Activated CD8-positive, alpha-beta T cell treated with anti-CD3 and anti-CD28 coated beads for 36 hours (primary cell): ENCODE measurements at regions of chr6 and their contacts with region 1.

Region 1: DNA sequence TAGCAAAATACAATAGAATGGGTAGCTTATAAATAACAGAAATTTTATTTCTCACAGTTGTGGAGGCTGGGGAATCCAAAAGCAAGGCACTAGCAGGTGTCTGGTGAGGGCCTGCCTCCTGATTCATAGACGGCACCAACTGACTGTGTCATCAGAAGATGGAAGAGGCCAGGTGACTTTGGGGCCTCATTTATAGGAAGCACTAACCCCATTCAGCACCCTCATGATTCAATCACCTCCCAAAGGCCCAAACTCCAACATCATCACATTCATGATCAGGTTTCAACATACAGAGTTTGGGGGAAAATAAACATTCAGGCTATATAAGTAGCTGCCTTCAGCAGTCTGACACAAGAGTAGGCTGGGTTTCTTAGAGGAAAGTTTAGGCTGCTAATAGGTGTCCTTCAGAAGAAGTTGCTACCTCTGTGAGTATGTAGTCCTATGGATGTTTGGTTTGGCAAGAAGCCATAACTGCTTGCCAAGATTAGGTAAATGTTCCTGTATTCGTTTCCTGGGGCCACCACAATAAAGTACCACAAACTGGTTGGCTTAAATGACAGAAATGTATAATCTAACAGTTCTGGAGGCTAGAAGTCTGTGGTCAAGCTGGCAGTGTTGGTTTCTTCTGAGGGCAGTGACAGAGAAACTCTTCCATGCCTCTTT is 48.8 kb downstream of the NT5E start:
- DNase-seq: no peak
- ATAC-seq: peak; percentile 19
- H3K4me3 Mint-ChIP-seq: no peak overlapping the region
- H3K27ac Mint-ChIP-seq: no peak overlapping the region
- H3K4me1 Mint-ChIP-seq: peaks cover 21% of the 10 kb centered on the region
- H3K27me3 Mint-ChIP-seq: no peaks in the 10 kb centered on the region
- CTCF ChIP-seq: no peak

Region 2: GRCh38 chr6:85354761-85355618 is 143.7 kb before region 1 on chr6:
- CTCF ChIA-PET with region 1: interaction called, 12 read pairs
- POLR2A ChIA-PET with region 1: no interaction called
- intact Hi-C with region 1: no loop called
- DNase-seq: peak; percentile 79
- ATAC-seq: peak; percentile 89
- H3K4me3 Mint-ChIP-seq: no peak overlapping the region
- H3K27ac Mint-ChIP-seq: no peak overlapping the region
- H3K4me1 Mint-ChIP-seq: no peaks in the 10 kb centered on the region
- H3K27me3 Mint-ChIP-seq: peaks cover 2% of the 10 kb centered on the region
- CTCF ChIP-seq: peak; percentile 91

Region 3: GRCh38 chr6:85810558-85810957 is 311.8 kb after region 1 on chr6:
- CTCF ChIA-PET with region 1: no interaction called
- POLR2A ChIA-PET with region 1: no interaction called
- intact Hi-C with region 1: no loop called
- DNase-seq: no peak
- ATAC-seq: no peak
- H3K4me3 Mint-ChIP-seq: no peak overlapping the region
- H3K27ac Mint-ChIP-seq: no peak overlapping the region
- H3K4me1 Mint-ChIP-seq: no peaks in the 10 kb centered on the region
- H3K27me3 Mint-ChIP-seq: peaks cover 2% of the 10 kb centered on the region
- CTCF ChIP-seq: no peak